T-cell (primary cell): ENCODE measurements at regions of chr4 and their contacts with region 1.

Region 1: DNA sequence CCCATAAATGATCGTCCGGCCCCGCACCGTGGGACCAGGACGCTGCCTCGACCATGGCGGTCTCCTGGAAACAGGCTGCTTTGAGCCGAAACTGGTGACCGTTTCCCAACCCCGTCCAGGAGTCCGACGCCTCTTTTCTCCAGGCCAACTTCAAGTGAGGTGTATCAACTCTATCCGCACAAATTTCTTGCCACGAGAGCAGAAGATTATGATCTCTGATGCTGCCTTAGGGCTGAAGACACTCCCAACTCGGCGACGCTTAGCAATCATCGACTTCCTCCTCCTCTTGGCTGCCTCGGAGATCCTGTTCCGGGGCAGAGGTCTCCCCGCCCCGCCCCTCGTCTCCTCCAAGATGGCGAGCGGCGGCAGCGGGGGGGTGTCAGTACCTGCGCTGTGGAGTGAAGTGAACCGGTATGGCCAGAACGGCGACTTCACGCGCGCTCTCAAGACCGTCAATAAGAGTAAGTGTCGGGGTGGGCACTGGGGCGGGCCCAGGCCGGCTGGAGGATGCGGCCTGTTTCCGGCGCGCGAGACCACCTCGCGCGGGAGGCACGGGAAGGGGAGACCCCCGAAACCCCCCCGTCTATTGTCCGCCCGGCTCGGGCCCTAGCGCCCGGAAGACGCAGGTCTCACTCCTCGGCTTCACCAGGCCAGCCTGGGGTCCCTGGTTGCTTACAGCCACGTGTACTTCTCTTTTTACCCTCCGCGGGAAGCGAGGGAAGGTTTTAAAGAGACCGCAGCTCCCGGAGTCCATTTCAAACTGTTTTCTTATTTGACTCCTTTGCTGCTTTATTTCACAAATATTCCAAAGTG is at the start of gene SRP72:
- DNase-seq: peak; percentile 71 to 96 (median 92)
- ATAC-seq: peak; percentile 97 to 98 (median 98)
- H3K4me3 ChIP-seq: peak within 1 kb of the TSS; percentile 90 to 99
- H3K4me3 Mint-ChIP-seq: peak within 1 kb of the TSS; percentile 97 to 100 (median 98)
- H3K27ac ChIP-seq: peak within 1 kb of the TSS; percentile 84
- H3K27ac Mint-ChIP-seq: peak within 1 kb of the TSS; percentile 96 to 99
- H3K4me1 ChIP-seq: peaks cover 23 to 38% of the 10 kb centered on the region in 2 experiments
- H3K4me1 Mint-ChIP-seq: peaks cover 62 to 65% (median 64%) of the 10 kb centered on the region in 3 donors
- H3K27me3 ChIP-seq: no peaks in the 10 kb centered on the region
- H3K27me3 Mint-ChIP-seq: no peaks in the 10 kb centered on the region
- total RNA-seq, gene SRP72: 98.0 to 115 (median 107) TPM

Region 2: DNA sequence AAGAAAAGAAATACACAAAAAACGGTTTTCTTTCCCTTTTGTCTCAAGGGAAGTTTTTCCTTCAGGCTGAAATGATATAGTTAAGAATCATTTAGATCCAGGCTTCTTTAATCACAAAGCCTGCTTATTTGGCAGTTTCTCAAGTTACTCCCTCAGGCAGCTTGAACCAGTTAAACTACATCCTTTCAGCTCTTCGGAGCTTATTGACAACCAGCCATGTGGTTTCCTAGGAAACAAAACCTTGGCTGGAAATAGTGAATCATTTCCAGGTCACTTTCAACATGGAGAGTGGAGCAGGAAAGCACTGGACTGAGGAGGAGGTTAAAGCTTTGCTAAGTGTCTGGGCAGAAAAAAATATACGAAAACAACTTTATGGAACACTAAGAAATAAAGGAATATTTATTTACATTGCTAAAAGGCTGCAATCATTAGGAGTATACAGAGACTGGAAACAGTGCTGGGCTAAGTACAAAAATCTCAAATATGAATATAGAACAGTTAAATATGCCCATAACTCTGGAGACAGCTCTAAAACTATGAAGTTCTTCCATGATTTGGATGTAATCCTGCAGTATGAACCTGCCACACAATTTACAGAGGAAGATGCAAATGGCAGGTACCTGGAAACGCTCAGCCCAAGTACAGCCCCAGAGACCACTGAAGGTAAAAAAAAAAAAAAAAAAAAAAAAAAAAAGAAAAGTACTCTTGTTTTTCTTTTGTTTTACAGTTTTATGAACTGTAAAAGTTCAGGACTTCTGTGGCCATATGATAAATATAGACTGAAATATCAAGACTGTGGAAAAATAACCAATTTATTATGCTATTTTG is 57.0 kb before region 1 on chr4:
- CTCF ChIA-PET with region 1: no interaction called
- POLR2A ChIA-PET with region 1: no interaction called
- DNase-seq: no peak
- ATAC-seq: no peak
- H3K4me3 ChIP-seq: no peak overlapping the region
- H3K4me3 Mint-ChIP-seq: no peak overlapping the region
- H3K27ac ChIP-seq: no peak overlapping the region
- H3K27ac Mint-ChIP-seq: no peak overlapping the region
- H3K4me1 ChIP-seq: no peaks in the 10 kb centered on the region
- H3K4me1 Mint-ChIP-seq: peaks cover 9 to 13% (median 12%) of the 10 kb centered on the region in 3 donors
- H3K27me3 ChIP-seq: no peaks in the 10 kb centered on the region
- H3K27me3 Mint-ChIP-seq: no peaks in the 10 kb centered on the region

Region 3: DNA sequence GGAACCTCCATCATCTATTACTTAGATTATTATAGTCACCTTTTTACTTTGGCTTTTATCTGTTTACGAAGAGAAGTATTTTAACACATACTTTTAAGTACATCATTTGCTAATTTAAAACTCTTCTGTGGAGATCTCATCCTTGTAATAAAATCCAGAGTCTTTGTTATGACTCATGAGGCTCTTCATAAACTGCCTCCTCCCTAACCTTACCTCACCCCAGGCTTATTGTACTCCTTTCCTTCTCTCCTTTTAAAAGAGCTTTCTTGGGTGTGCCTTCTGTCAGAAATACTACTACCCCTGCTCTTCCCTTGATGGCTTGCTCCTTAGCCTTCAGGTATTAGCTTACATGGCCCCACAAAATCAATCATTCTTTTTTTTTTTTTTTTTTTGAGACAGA is 44.7 kb after region 1 on chr4:
- CTCF ChIA-PET with region 1: no interaction called
- POLR2A ChIA-PET with region 1: no interaction called
- DNase-seq: no peak
- ATAC-seq: no peak
- H3K4me3 ChIP-seq: no peak overlapping the region
- H3K4me3 Mint-ChIP-seq: no peak overlapping the region
- H3K27ac ChIP-seq: no peak overlapping the region
- H3K27ac Mint-ChIP-seq: no peak overlapping the region
- H3K4me1 ChIP-seq: no peaks in the 10 kb centered on the region
- H3K4me1 Mint-ChIP-seq: no peaks in the 10 kb centered on the region
- H3K27me3 ChIP-seq: no peaks in the 10 kb centered on the region
- H3K27me3 Mint-ChIP-seq: peaks cover 3 to 4% of the 10 kb centered on the region in 2 donors

Region 4: DNA sequence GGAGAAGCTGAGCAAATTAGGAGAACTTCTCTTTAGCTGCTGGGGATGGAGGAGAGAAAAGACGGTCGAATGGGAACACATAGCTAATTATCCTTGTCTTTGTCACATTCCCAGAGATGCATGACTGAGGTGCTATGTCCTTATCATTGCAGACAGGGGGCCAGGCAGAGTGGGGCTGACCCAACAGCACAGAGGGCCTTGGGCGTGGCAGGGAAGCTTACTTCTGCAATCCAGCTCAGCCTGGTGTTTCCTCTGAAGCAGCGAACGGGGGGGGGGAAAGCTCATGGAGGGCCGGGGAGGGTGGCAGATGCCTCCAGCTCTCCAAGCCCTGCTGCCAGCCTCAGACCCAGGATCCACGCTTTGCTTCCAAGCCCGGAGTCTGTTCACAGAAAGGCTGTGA is 264.4 kb after region 1 on chr4:
- CTCF ChIA-PET with region 1: interaction called in 1 of 2 experiments, 10 read pairs
- POLR2A ChIA-PET with region 1: no interaction called
- DNase-seq: peak in 1 of 35 experiments; percentile 16
- ATAC-seq: no peak
- H3K4me3 ChIP-seq: no peak overlapping the region
- H3K4me3 Mint-ChIP-seq: no peak overlapping the region
- H3K27ac ChIP-seq: no peak overlapping the region
- H3K27ac Mint-ChIP-seq: no peak overlapping the region
- H3K4me1 ChIP-seq: no peaks in the 10 kb centered on the region
- H3K4me1 Mint-ChIP-seq: no peaks in the 10 kb centered on the region
- H3K27me3 ChIP-seq: peaks cover 0 to 4% of the 10 kb centered on the region in 2 experiments
- H3K27me3 Mint-ChIP-seq: peaks cover 0 to 1% of the 10 kb centered on the region in 2 donors